GM12878 (cell line): ENCODE measurements at regions of chr9 and their contacts with region 1.

Region 1: DNA sequence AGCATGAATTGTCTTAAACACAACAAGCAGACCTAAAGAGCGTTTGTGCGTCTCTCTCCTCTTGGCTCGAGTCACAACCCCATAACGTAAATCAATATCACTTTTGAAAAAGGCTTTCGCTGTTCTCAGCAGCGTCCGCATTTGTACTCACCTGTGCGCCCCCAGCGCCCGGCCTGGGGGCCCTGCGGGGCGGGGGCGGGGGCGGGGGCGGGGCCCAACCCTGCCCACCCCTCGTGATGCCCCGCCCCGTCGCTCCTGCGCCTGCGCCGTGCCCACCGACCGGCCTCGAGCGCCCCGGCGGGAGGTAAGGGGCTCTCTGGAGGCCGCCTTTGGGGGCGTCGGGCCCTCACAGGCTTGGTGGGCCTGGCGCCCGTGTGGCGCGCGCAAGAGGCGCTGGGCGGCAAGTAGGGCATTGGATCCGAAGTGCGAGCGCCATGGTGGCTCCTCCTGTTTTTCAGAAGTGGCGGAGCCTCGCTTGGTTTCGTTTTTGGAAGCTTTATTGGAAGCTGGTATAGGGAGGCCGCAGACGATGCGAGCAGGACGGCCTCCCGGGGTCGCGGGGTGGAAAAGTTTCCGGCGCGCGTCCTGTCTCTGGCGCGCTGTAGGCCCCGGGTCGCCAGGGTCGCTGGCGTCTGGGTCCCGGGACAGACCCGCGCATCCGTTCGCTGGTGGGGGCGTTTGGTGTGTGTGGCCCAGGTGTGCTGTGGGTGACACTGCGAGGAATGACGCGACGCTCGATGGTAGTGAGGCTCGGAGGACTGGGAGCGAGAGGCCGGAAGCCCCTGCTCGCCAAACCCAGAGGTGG is at the start of gene STX17:
- DNase-seq: peak; percentile 16
- ATAC-seq: peak; percentile 93
- H3K4me3 ChIP-seq: peak within 1 kb of the TSS; percentile 91
- H3K27ac ChIP-seq: peak within 1 kb of the TSS; percentile 92
- H3K4me1 ChIP-seq: peaks cover 5% of the 10 kb centered on the region; the same call in 1 of the 2 replicates
- H3K27me3 ChIP-seq: no peaks in the 10 kb centered on the region
- CTCF ChIP-seq: 0 out of 6 replicates have a peak, but pooled peaks of 1 of the 3 experiments have one; percentile 3
- EP300 ChIP-seq: no peak
- POLR2A ChIP-seq: peak; percentile 85
- RAD21 ChIP-seq: no peak
- polyA plus RNA-seq, gene STX17: 15.1 to 19.4 TPM

Region 2: GRCh38 chr9:99253772-99254431 is 652.7 kb before region 1 on chr9:
- CTCF ChIA-PET with region 1: no interaction called
- POLR2A ChIA-PET with region 1: no interaction called
- RAD21 ChIA-PET with region 1: no interaction called
- SMC1A ChIA-PET with region 1: no interaction called
- in situ Hi-C with region 1: no loop called
- intact Hi-C with region 1: no loop called
- DNase-seq: peak; percentile 90
- ATAC-seq: peak; percentile 89
- H3K4me3 ChIP-seq: peak overlapping the region; percentile 29; the same call in 1 of the 2 replicates
- H3K27ac ChIP-seq: peak overlapping the region; percentile 96
- H3K4me1 ChIP-seq: peaks cover 34% of the 10 kb centered on the region
- H3K27me3 ChIP-seq: no peaks in the 10 kb centered on the region
- CTCF ChIP-seq: peak; percentile 2 to 17 (median 13); a peak in 3 of 6 replicates
- EP300 ChIP-seq: peak; percentile 75 to 89; a peak in 3 of 4 replicates
- POLR2A ChIP-seq: peak; percentile 81
- RAD21 ChIP-seq: no peak

Region 3: DNA sequence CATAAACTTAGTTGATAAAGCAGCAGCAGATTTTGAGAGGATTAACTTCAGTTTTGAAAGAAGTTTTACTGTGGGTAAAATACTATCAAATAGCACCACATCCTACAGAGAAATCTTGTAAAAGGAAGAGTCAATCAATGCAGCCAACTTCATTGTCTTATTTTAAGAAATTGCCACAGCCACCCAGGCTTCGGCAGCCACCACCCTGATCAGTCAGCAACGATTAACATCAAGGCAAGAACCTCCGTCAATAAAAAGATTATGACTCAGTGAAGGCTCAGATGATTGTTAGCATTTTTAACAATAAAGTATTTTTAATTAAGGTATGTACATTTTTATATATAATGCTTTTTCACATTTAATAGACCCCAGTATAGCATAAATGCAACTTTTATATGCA is 207.2 kb before region 1 on chr9:
- CTCF ChIA-PET with region 1: no interaction called
- POLR2A ChIA-PET with region 1: no interaction called
- RAD21 ChIA-PET with region 1: no interaction called
- SMC1A ChIA-PET with region 1: no interaction called
- in situ Hi-C with region 1: no loop called
- intact Hi-C with region 1: no loop called
- DNase-seq: no peak
- ATAC-seq: no peak
- H3K4me3 ChIP-seq: no peak overlapping the region
- H3K27ac ChIP-seq: no peak overlapping the region
- H3K4me1 ChIP-seq: no peaks in the 10 kb centered on the region
- H3K27me3 ChIP-seq: no peaks in the 10 kb centered on the region
- CTCF ChIP-seq: no peak
- EP300 ChIP-seq: no peak
- POLR2A ChIP-seq: no peak
- RAD21 ChIP-seq: no peak

Region 4: DNA sequence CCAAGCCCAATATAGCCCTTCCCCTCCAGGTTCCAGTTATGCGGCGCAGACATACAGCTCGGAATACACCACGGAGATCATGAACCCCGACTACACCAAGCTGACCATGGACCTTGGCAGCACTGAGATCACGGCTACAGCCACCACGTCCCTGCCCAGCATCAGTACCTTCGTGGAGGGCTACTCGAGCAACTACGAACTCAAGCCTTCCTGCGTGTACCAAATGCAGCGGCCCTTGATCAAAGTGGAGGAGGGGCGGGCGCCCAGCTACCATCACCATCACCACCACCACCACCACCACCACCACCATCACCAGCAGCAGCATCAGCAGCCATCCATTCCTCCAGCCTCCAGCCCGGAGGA is 78.6 kb before region 1 on chr9:
- CTCF ChIA-PET with region 1: interaction called, 14 read pairs
- POLR2A ChIA-PET with region 1: interaction called, 10 read pairs
- RAD21 ChIA-PET with region 1: interaction called, 8 read pairs
- SMC1A ChIA-PET with region 1: interaction called, 4 read pairs
- in situ Hi-C with region 1: no loop called
- intact Hi-C with region 1: loop called (anchors 2 kb)
- DNase-seq: no peak
- ATAC-seq: no peak
- H3K4me3 ChIP-seq: no peak overlapping the region
- H3K27ac ChIP-seq: no peak overlapping the region
- H3K4me1 ChIP-seq: peaks cover 12% of the 10 kb centered on the region
- H3K27me3 ChIP-seq: peaks cover 0 to 7% of the 10 kb centered on the region in 2 experiments; a peak in 2 of 4 replicates
- CTCF ChIP-seq: no peak
- EP300 ChIP-seq: no peak
- POLR2A ChIP-seq: no peak
- RAD21 ChIP-seq: no peak

Region 5: DNA sequence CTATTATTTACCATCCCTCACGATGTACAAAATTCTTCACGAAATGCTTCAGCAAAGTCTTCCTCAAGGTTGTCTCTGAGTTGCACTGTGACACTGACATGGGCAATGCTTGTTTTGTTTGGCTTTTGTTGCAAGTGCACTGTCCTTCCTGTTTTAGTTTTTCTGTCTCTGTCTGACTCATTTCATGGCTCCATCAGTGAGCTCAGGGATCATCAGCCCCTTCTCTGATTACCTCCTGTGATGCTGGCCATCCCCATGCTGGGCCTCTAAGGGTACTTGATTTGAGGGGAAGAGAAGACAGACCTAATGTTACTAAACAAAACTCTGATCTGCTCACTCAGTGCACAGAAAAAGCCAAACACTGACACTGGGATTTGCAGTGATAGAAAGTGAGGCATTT is 37.8 kb before region 1 on chr9:
- CTCF ChIA-PET with region 1: no interaction called
- POLR2A ChIA-PET with region 1: interaction called, 3 read pairs
- RAD21 ChIA-PET with region 1: no interaction called
- SMC1A ChIA-PET with region 1: no interaction called
- in situ Hi-C with region 1: no loop called
- intact Hi-C with region 1: loop called (anchors 2 kb)
- DNase-seq: peak; percentile 44
- ATAC-seq: peak; percentile 91
- H3K4me3 ChIP-seq: no peak overlapping the region
- H3K27ac ChIP-seq: 0 out of 2 replicates have a peak overlapping the region, but pooled peaks have one; percentile 8
- H3K4me1 ChIP-seq: peaks cover 18% of the 10 kb centered on the region
- H3K27me3 ChIP-seq: no peaks in the 10 kb centered on the region
- CTCF ChIP-seq: no peak
- EP300 ChIP-seq: 0 out of 4 replicates have a peak, but pooled peaks of 1 of the 2 experiments have one; percentile 22
- POLR2A ChIP-seq: no peak
- RAD21 ChIP-seq: no peak